GM12878 (cell line): ENCODE measurements at regions of chr3 and their contacts with region 1.

Region 1: GRCh38 chr3:46078712-46079400 is 51.6 kb upstream of the XCR1 start:
- DNase-seq: peak; percentile 82
- ATAC-seq: peak; percentile 99
- H3K4me3 ChIP-seq: no peak overlapping the region
- H3K27ac ChIP-seq: no peak overlapping the region
- H3K4me1 ChIP-seq: no peaks in the 10 kb centered on the region
- H3K27me3 ChIP-seq: 0 out of 4 replicates have a peak, but pooled peaks cover 0 to 2% of the 10 kb centered on the region in 2 experiments
- CTCF ChIP-seq: peak; percentile 93 to 100 (median 100); a peak in 5 of 6 replicates
- EP300 ChIP-seq: no peak
- POLR2A ChIP-seq: no peak
- RAD21 ChIP-seq: peak; percentile 100

Region 2: DNA sequence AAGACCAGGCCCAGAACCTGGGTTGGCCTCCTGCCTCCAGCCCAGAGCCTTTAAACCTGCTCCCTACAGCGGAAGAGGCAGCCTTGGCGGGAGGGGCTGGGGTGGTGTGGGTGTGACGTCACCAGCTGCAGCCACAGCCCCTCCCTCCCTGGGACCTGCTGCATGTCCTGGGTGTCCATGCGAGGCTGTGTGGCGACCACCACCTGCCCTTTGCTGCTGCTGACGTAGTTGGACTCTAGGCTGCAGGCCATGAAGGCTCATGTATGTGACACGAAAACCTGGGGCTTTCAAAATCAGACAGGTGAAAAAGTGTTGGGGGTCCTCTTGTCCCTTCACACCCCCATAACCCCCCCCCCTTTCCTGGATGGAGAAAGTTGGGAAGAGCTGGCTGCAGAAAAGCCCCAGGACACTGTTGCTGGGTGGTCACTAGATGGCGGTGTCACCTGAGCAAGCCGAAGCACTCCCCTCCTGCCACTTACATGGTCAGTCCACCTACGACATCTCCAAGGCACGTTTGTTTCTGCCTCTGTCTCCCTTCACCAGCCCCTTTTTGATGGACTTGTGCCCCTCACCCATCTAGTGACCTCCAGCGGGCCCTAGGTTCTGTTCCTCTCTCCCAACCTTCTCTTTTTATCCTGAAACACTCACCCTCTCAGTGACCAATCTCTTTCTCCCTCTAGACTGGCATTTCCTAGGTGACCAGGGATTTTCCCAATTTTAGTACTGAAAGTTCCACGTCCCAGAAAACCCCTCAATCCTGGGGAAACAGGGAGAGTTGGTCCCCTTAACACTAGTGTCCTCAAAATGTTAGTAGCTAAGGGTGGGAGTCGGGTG is 317.8 kb before region 1 on chr3:
- CTCF ChIA-PET with region 1: interaction called, 79 read pairs
- POLR2A ChIA-PET with region 1: no interaction called
- RAD21 ChIA-PET with region 1: interaction called, 32 read pairs
- SMC1A ChIA-PET with region 1: interaction called, 42 read pairs
- in situ Hi-C with region 1: no loop called
- intact Hi-C with region 1: loop called (anchors 1 kb)
- DNase-seq: peak; percentile 5
- ATAC-seq: peak; percentile 98
- H3K4me3 ChIP-seq: no peak overlapping the region
- H3K27ac ChIP-seq: no peak overlapping the region
- H3K4me1 ChIP-seq: no peaks in the 10 kb centered on the region
- H3K27me3 ChIP-seq: 0 out of 4 replicates have a peak, but pooled peaks cover 0 to 2% of the 10 kb centered on the region in 2 experiments
- CTCF ChIP-seq: peak; percentile 80 to 89 (median 83)
- EP300 ChIP-seq: no peak
- POLR2A ChIP-seq: no peak
- RAD21 ChIP-seq: peak; percentile 87

Region 3: DNA sequence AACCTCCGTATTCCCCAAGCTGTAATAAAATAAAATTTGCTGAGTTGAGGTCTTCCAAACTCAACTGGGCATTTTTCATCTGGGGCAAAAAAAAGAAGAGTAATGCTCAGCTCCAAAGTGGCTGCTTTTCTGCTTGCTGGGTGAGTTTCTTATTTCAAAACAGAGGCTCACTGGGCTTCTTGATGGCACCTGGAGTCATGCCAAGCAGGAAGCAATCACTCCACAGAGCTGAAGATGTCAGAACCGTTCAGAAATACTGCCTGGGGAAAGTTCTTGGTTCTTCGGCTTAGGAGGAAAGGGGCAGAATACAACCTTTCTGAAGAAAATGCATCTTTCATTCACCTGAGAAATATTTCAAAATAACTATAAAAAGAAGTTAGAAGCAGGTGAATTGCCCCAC is 188.5 kb before region 1 on chr3:
- CTCF ChIA-PET with region 1: no interaction called
- POLR2A ChIA-PET with region 1: no interaction called
- RAD21 ChIA-PET with region 1: no interaction called
- SMC1A ChIA-PET with region 1: no interaction called
- in situ Hi-C with region 1: no loop called
- intact Hi-C with region 1: no loop called
- DNase-seq: no peak
- ATAC-seq: no peak
- H3K4me3 ChIP-seq: no peak overlapping the region
- H3K27ac ChIP-seq: no peak overlapping the region
- H3K4me1 ChIP-seq: peaks cover 33% of the 10 kb centered on the region
- H3K27me3 ChIP-seq: no peaks in the 10 kb centered on the region
- CTCF ChIP-seq: no peak
- EP300 ChIP-seq: no peak
- POLR2A ChIP-seq: no peak
- RAD21 ChIP-seq: no peak

Region 4: GRCh38 chr3:45948311-45948781 is 130.5 kb before region 1 on chr3:
- CTCF ChIA-PET with region 1: interaction called, 478 read pairs
- POLR2A ChIA-PET with region 1: no interaction called
- RAD21 ChIA-PET with region 1: interaction called, 10 read pairs
- SMC1A ChIA-PET with region 1: interaction called, 523 read pairs
- in situ Hi-C with region 1: loop called (anchors 5 kb)
- intact Hi-C with region 1: no loop called
- DNase-seq: no peak
- ATAC-seq: no peak
- H3K4me3 ChIP-seq: no peak overlapping the region
- H3K27ac ChIP-seq: no peak overlapping the region
- H3K4me1 ChIP-seq: no peaks in the 10 kb centered on the region
- H3K27me3 ChIP-seq: no peaks in the 10 kb centered on the region
- CTCF ChIP-seq: no peak
- EP300 ChIP-seq: no peak
- POLR2A ChIP-seq: no peak
- RAD21 ChIP-seq: no peak

Region 5: DNA sequence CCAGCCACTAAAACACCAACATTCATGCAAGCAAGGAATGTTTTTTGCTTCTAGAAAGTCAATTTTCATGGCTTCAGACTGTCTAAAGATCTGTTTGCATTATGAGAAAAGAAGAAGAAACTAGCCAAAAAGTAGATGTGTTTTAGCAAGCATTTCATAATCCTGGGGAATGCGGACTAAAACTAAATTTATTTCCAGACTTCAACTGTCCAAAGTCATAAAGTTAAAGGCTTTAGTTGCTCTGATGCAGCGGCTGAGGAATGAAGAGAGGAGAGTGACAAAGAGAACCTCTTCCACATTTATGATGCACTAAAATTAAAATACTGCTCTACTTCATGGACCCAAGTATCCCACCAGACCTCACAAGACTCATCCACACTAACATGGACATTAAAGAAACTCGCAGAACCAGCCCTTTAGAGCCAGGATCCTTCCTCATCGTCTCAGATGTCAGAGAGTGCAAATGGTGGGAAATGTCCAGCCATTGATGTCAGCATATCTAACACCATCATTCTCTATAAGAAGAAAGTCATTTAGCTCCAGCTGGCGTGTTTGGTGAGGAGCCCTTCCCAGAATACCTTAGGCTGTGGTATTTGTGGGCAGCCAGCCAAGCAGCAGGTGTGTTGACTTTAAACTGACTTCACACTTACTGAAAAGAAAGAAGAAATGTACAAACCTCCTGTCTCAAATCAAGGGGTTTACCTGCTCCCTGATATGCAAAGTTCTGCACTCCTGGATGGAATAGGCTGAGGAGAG is 100.7 kb before region 1 on chr3:
- CTCF ChIA-PET with region 1: interaction called, 17 read pairs
- POLR2A ChIA-PET with region 1: no interaction called
- RAD21 ChIA-PET with region 1: interaction called, 10 read pairs
- SMC1A ChIA-PET with region 1: interaction called, 12 read pairs
- in situ Hi-C with region 1: no loop called
- intact Hi-C with region 1: no loop called
- DNase-seq: no peak
- ATAC-seq: no peak
- H3K4me3 ChIP-seq: no peak overlapping the region
- H3K27ac ChIP-seq: no peak overlapping the region
- H3K4me1 ChIP-seq: peaks cover 11% of the 10 kb centered on the region
- H3K27me3 ChIP-seq: no peaks in the 10 kb centered on the region
- CTCF ChIP-seq: no peak
- EP300 ChIP-seq: no peak
- POLR2A ChIP-seq: no peak
- RAD21 ChIP-seq: no peak

Region 6: GRCh38 chr3:46049116-46049515 is 29.7 kb before region 1 on chr3:
- CTCF ChIA-PET with region 1: interaction called, 25 read pairs
- POLR2A ChIA-PET with region 1: no interaction called
- RAD21 ChIA-PET with region 1: interaction called, 3 read pairs
- SMC1A ChIA-PET with region 1: interaction called, 4 read pairs
- in situ Hi-C with region 1: no loop called
- intact Hi-C with region 1: no loop called
- DNase-seq: no peak
- ATAC-seq: no peak
- H3K4me3 ChIP-seq: no peak overlapping the region
- H3K27ac ChIP-seq: no peak overlapping the region
- H3K4me1 ChIP-seq: no peaks in the 10 kb centered on the region
- H3K27me3 ChIP-seq: no peaks in the 10 kb centered on the region
- CTCF ChIP-seq: no peak
- EP300 ChIP-seq: no peak
- POLR2A ChIP-seq: no peak
- RAD21 ChIP-seq: no peak

Region 7: GRCh38 chr3:46098319-46098761 is 19.5 kb after region 1 on chr3:
- CTCF ChIA-PET with region 1: interaction called, 80 read pairs
- POLR2A ChIA-PET with region 1: interaction called, 3 read pairs
- RAD21 ChIA-PET with region 1: interaction called, 5 read pairs
- SMC1A ChIA-PET with region 1: interaction called, 57 read pairs
- in situ Hi-C with region 1: no loop called
- intact Hi-C with region 1: no loop called
- DNase-seq: peak; percentile 86
- ATAC-seq: peak; percentile 78
- H3K4me3 ChIP-seq: 0 out of 2 replicates have a peak overlapping the region, but pooled peaks have one; percentile 29
- H3K27ac ChIP-seq: peak overlapping the region; percentile 94
- H3K4me1 ChIP-seq: peaks cover 60% of the 10 kb centered on the region
- H3K27me3 ChIP-seq: no peaks in the 10 kb centered on the region
- CTCF ChIP-seq: no peak
- EP300 ChIP-seq: peak; percentile 64 to 81; a peak in 3 of 4 replicates
- POLR2A ChIP-seq: peak; percentile 53; the same call in 1 of the 2 replicates
- RAD21 ChIP-seq: no peak

Region 8: DNA sequence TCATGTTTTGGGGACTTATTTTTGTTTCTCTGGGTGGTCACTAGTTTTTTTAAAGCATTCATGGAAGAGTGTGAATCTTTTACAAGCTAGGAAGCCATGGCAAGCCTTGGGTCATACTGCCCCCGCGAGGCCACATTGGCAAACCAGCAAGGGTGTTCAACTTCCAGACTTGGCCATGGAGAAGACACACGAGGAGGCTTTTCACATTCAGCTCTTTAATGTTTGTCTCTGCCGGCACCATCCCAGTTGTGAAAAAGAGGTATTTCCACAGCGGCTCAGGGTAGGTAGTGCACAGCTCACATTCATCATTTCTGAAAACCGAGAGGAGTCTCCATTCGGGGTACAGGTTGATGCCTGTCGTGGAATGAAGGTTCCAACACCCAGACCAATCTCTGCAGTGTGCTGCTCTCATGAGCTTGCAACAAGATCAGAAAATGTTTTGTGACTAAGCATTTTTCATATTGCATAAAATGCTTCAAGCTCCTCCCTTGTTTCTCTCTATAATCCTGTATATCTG is 299.6 kb after region 1 on chr3:
- CTCF ChIA-PET with region 1: interaction called, 714 read pairs
- POLR2A ChIA-PET with region 1: no interaction called
- RAD21 ChIA-PET with region 1: interaction called, 396 read pairs
- SMC1A ChIA-PET with region 1: interaction called, 581 read pairs
- in situ Hi-C with region 1: no loop called
- intact Hi-C with region 1: no loop called
- DNase-seq: no peak
- ATAC-seq: peak; percentile 90
- H3K4me3 ChIP-seq: no peak overlapping the region
- H3K27ac ChIP-seq: no peak overlapping the region
- H3K4me1 ChIP-seq: peaks cover 12% of the 10 kb centered on the region
- H3K27me3 ChIP-seq: peaks cover 0 to 3% of the 10 kb centered on the region in 2 experiments; a peak in 2 of 4 replicates
- CTCF ChIP-seq: peak; percentile 77 to 80 (median 79)
- EP300 ChIP-seq: no peak
- POLR2A ChIP-seq: no peak
- RAD21 ChIP-seq: peak; percentile 92